ENCODE measurements at regions of chr5 and their contacts with region 1.

Region 1: DNA sequence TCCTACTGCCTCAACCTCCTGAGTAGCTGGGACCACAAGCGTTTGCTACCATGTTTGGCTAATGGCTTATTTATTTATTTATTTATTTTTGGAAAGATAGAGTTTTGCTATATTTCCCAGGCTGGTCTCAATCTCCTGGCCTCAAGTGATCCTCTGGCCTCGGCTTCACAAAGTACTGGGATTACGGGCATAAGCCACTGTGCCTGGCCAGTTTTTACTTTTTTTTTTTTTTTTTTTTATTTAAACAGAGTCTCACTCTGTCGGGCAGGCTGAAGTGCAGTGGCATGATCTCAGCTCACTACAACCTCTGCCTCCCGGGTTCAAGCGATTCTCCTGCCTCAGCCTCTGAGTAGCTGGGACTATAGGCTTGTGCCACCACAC is 5.2 kb upstream of the NDFIP1 start:
- DNase-seq: no peak
- H3K4me3 Mint-ChIP-seq: no peak overlapping the region
- H3K27ac Mint-ChIP-seq: no peak overlapping the region
- H3K4me1 Mint-ChIP-seq: peaks cover 7% of the 10 kb centered on the region
- H3K27me3 Mint-ChIP-seq: no peaks in the 10 kb centered on the region
- CTCF ChIP-seq: no peak

Region 2: GRCh38 chr5:143605403-143606005 is 1502.2 kb after region 1 on chr5:
- CTCF ChIA-PET with region 1: interaction called, 10 read pairs
- intact Hi-C with region 1: no loop called
- DNase-seq: no peak
- H3K4me3 Mint-ChIP-seq: no peak overlapping the region
- H3K27ac Mint-ChIP-seq: no peak overlapping the region
- H3K4me1 Mint-ChIP-seq: peaks cover 21% of the 10 kb centered on the region
- H3K27me3 Mint-ChIP-seq: no peaks in the 10 kb centered on the region
- CTCF ChIP-seq: no peak